CD8-positive, alpha-beta T cell (primary cell): ENCODE measurements at regions of chr1 and their contacts with region 1.

Region 1: GRCh38 chr1:64823691-64824476 is 79.0 kb downstream of the RAVER2 start:
- DNase-seq: peak; percentile 15 to 82 (median 65)
- ATAC-seq: peak; percentile 56
- H3K4me3 ChIP-seq: no peak overlapping the region
- H3K4me3 Mint-ChIP-seq: peak overlapping the region; percentile 38
- H3K27ac ChIP-seq: no peak overlapping the region
- H3K27ac Mint-ChIP-seq: no peak overlapping the region
- H3K4me1 ChIP-seq: peaks cover 7% of the 10 kb centered on the region
- H3K4me1 Mint-ChIP-seq: peaks cover 27% of the 10 kb centered on the region
- H3K27me3 ChIP-seq: no peaks in the 10 kb centered on the region
- H3K27me3 Mint-ChIP-seq: no peaks in the 10 kb centered on the region
- CTCF ChIP-seq: peak; percentile 88

Region 2: DNA sequence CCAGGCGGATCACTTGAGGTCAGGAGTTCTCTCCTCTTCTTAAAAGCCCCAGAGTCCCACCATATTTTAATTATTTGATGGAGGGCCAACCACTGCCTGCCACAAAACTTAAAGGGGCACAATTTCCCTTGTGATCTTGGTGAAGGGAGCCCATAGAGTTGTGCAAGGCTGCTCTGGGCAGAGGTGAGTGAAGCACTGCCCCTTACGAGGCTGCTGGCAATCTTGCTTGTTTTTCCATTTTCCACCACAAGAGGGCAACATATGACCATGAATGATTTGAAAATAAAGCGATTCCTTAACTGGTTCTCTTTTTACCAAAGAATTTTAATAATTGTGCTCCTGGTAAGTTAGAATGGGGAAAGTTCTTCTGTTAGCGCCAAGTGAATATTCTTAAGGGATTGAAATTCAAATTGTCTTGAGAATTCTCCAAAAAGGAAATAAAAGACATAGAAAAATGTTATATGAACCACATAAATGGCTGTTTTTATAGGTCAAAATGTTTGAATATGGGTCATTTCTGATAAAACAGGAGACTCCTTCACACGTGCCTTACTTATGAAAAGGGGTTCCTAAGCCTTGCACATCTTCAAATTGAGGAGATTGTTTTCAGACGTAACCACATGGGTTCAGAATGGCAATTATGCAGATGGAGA is 1208.0 kb before region 1 on chr1:
- CTCF ChIA-PET with region 1: no interaction called
- POLR2A ChIA-PET with region 1: no interaction called
- intact Hi-C with region 1: loop called in 1 of 2 experiments (anchors 5 kb)
- DNase-seq: peak in 7 of 9 experiments; percentile 40 to 76 (median 68)
- ATAC-seq: peak; percentile 75
- H3K4me3 ChIP-seq: no peak overlapping the region
- H3K4me3 Mint-ChIP-seq: no peak overlapping the region
- H3K27ac ChIP-seq: no peak overlapping the region
- H3K27ac Mint-ChIP-seq: no peak overlapping the region
- H3K4me1 ChIP-seq: no peaks in the 10 kb centered on the region
- H3K4me1 Mint-ChIP-seq: peaks cover 4% of the 10 kb centered on the region
- H3K27me3 ChIP-seq: no peaks in the 10 kb centered on the region
- H3K27me3 Mint-ChIP-seq: no peaks in the 10 kb centered on the region
- CTCF ChIP-seq: peak; percentile 77

Region 3: GRCh38 chr1:64268653-64269557 is 555.0 kb before region 1 on chr1:
- CTCF ChIA-PET with region 1: interaction called, 24 read pairs
- POLR2A ChIA-PET with region 1: interaction called, 3 read pairs
- intact Hi-C with region 1: loop called (anchors 1 kb)
- DNase-seq: peak; percentile 5 to 77 (median 60)
- ATAC-seq: peak; percentile 52
- H3K4me3 ChIP-seq: no peak overlapping the region
- H3K4me3 Mint-ChIP-seq: no peak overlapping the region
- H3K27ac ChIP-seq: no peak overlapping the region
- H3K27ac Mint-ChIP-seq: no peak overlapping the region
- H3K4me1 ChIP-seq: no peaks in the 10 kb centered on the region
- H3K4me1 Mint-ChIP-seq: no peaks in the 10 kb centered on the region
- H3K27me3 ChIP-seq: peaks cover 0 to 4% of the 10 kb centered on the region in 2 experiments
- H3K27me3 Mint-ChIP-seq: peaks cover 13% of the 10 kb centered on the region
- CTCF ChIP-seq: peak; percentile 68

Region 4: DNA sequence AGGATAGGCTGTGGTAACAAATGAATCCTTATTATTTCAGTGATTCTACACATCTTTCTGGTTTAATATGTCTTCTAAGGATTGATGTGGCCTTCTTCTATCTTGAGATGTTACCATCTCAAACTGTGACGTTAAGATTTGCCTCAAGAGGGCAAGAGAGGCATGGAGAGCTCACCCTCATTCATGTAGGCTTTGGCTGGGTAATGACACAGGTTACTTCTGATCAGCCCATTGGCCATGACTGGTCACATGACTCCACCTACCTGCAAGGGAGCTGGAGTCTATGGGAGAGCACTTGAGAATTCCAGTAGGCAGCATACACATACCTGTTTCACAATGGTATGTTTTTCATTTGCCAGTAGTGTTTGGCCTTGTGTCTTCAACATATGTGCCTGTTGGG is 323.9 kb before region 1 on chr1:
- CTCF ChIA-PET with region 1: no interaction called
- POLR2A ChIA-PET with region 1: no interaction called
- intact Hi-C with region 1: loop called in 1 of 2 experiments (anchors 10 kb)
- DNase-seq: peak in 2 of 9 experiments; percentile 10 to 42
- ATAC-seq: peak; percentile 54
- H3K4me3 ChIP-seq: no peak overlapping the region
- H3K4me3 Mint-ChIP-seq: no peak overlapping the region
- H3K27ac ChIP-seq: no peak overlapping the region
- H3K27ac Mint-ChIP-seq: no peak overlapping the region
- H3K4me1 ChIP-seq: no peaks in the 10 kb centered on the region
- H3K4me1 Mint-ChIP-seq: peaks cover 4% of the 10 kb centered on the region
- H3K27me3 ChIP-seq: no peaks in the 10 kb centered on the region
- H3K27me3 Mint-ChIP-seq: peaks cover under 1% of the 10 kb centered on the region
- CTCF ChIP-seq: no peak

Region 5: DNA sequence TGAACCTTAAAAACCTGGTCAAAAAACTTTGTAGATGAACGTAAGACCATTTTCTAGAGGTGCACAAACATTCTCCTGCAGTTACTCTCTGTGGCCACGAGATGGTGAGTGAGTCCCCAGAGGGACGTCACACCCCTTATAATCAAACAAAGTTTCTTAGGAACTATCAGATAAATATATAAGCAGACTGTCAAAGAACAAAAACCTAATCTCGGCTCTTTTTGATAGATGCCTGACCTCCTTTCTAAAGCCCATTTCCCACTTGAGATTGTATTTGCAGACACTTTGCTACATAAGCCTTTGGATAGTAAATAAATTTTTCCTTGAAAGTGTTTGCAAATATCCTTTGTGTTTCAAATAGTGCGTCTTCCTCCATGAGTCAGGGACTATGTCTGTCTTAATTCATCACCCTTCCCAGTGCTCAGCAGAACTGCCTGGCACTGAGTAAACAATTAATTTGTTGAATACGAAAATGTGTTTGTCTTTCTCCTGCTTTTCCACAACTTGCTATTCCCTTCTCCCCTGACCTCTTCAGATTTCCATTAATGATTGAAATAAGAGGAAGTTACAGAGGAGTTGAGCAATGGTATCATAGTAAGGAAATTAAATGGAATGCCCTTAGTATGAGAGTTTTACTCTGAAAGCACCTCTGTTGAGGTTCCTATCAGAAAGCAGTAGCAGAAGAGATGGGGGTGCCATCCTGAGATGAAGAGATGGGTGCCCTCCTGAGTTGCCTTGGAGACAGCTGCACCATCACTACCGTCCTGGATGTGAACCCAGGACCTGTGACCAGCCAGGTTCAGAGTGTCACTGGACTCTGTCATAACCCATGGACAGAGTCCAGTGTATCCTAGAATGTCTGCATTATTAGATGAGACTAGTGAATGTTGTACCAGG is 136.8 kb before region 1 on chr1:
- CTCF ChIA-PET with region 1: interaction called, 13 read pairs
- POLR2A ChIA-PET with region 1: interaction called, 3 read pairs
- intact Hi-C with region 1: loop called (anchors 1 kb)
- DNase-seq: peak in 5 of 9 experiments; percentile 5 to 65 (median 28)
- ATAC-seq: peak; percentile 79
- H3K4me3 ChIP-seq: no peak overlapping the region
- H3K4me3 Mint-ChIP-seq: no peak overlapping the region
- H3K27ac ChIP-seq: no peak overlapping the region
- H3K27ac Mint-ChIP-seq: no peak overlapping the region
- H3K4me1 ChIP-seq: no peaks in the 10 kb centered on the region
- H3K4me1 Mint-ChIP-seq: no peaks in the 10 kb centered on the region
- H3K27me3 ChIP-seq: no peaks in the 10 kb centered on the region
- H3K27me3 Mint-ChIP-seq: no peaks in the 10 kb centered on the region
- CTCF ChIP-seq: peak; percentile 86

Region 6: GRCh38 chr1:64744492-64745180 is 79.2 kb before region 1 on chr1 and contains the start of gene RAVER2:
- CTCF ChIA-PET with region 1: interaction called, 7 read pairs
- POLR2A ChIA-PET with region 1: no interaction called
- intact Hi-C with region 1: loop called (anchors 1 to 2 kb)
- DNase-seq: peak; percentile 16 to 79 (median 57)
- ATAC-seq: peak; percentile 81
- H3K4me3 ChIP-seq: peak within 1 kb of the TSS; percentile 52 to 64
- H3K4me3 Mint-ChIP-seq: peak within 1 kb of the TSS; percentile 90
- H3K27ac ChIP-seq: peak within 1 kb of the TSS in 1 of 2 experiments; percentile 53
- H3K27ac Mint-ChIP-seq: peak within 1 kb of the TSS; percentile 75
- H3K4me1 ChIP-seq: peaks cover 13% of the 10 kb centered on the region
- H3K4me1 Mint-ChIP-seq: peaks cover 22% of the 10 kb centered on the region
- H3K27me3 ChIP-seq: no peaks in the 10 kb centered on the region
- H3K27me3 Mint-ChIP-seq: peaks cover 4% of the 10 kb centered on the region
- CTCF ChIP-seq: peak; percentile 43
- total RNA-seq, gene RAVER2: 1.1 TPM

Region 7: GRCh38 chr1:64811131-64811530 is 12.8 kb before region 1 on chr1:
- CTCF ChIA-PET with region 1: interaction called, 10 read pairs
- POLR2A ChIA-PET with region 1: no interaction called
- intact Hi-C with region 1: no loop called
- DNase-seq: no peak
- ATAC-seq: no peak
- H3K4me3 ChIP-seq: no peak overlapping the region
- H3K4me3 Mint-ChIP-seq: no peak overlapping the region
- H3K27ac ChIP-seq: no peak overlapping the region
- H3K27ac Mint-ChIP-seq: no peak overlapping the region
- H3K4me1 ChIP-seq: no peaks in the 10 kb centered on the region
- H3K4me1 Mint-ChIP-seq: no peaks in the 10 kb centered on the region
- H3K27me3 ChIP-seq: no peaks in the 10 kb centered on the region
- H3K27me3 Mint-ChIP-seq: no peaks in the 10 kb centered on the region
- CTCF ChIP-seq: no peak